Heart left ventricle (tissue), 16 donors: ENCODE measurements at regions of chr15 and their contacts with region 1.

Region 1: GRCh38 chr15:93087825-93088199 is 1.2 kb downstream of the RGMA start:
- DNase-seq: peak; percentile 63 to 79 (median 71)
- ATAC-seq: peak; percentile 46 to 73 (median 69)
- H3K4me3 ChIP-seq: peak overlapping the region; percentile 42 to 81 (median 63)
- H3K27ac ChIP-seq: peak overlapping the region; percentile 63 to 86 (median 78)
- H3K4me1 ChIP-seq: peaks cover 0 to 29% (median 12%) of the 10 kb centered on the region in 12 donors
- H3K27me3 ChIP-seq: peaks cover 0 to 66% (median 6%) of the 10 kb centered on the region in 9 donors
- CTCF ChIP-seq: peak; percentile 84 to 95 (median 91)
- POLR2A ChIP-seq: no peak

Region 2: GRCh38 chr15:92845126-92845508 is 242.7 kb before region 1 on chr15:
- intact Hi-C with region 1: no loop called
- DNase-seq: no peak
- ATAC-seq: peak; percentile 51 to 71 (median 61)
- H3K4me3 ChIP-seq: peak overlapping the region in 1 of 12 donors; percentile 21
- H3K27ac ChIP-seq: peak overlapping the region in 3 of 12 donors; percentile 4 to 88 (median 4)
- H3K4me1 ChIP-seq: peaks cover 0 to 43% (median 9%) of the 10 kb centered on the region in 12 donors
- H3K27me3 ChIP-seq: no peaks in the 10 kb centered on the region
- CTCF ChIP-seq: no peak
- POLR2A ChIP-seq: no peak

Region 3: DNA sequence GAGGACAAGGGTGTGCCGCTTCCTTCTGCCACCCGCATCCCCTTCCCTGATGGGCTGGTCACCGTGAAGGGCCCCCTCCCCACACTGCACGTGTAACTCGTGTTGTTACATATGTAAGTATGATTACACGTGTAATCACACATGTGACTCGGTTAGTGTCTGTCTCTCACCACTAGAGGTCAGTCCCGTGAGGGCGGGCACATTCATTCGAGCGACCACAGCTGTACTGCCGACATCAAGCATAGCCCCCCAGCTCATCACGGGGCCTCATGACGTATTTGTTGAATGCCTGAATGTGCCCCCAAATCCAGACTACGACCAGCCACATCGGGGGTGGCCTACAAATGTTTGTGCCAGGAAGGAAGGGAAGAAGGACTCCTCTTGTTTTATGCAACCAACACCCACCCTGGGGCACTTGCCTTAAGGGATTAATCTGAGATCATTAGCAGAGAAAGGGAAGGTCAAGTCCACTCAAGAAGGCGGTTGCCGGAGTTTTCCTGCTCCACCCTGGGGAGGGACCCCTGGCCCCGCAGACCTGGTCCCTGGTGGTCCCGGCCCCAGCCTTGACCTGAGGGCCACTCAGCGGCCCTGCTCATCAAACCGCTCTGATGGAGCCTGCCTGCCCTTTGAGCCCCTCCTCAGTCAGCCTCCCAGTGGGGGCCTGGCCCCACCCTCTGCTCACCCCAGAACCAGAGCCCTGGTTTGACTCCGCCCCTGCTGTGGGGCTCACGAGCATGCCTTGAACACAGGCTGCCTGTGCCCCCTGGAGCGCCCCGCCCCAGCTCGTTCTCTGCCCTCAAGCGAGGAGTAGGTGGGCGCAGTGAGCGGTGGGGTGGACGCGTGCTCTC is 51.6 kb before region 1 on chr15:
- intact Hi-C with region 1: loop called in 4 of 10 experiments (anchors 5 kb)
- DNase-seq: peak in 3 of 5 donors; percentile 19 to 54 (median 43)
- ATAC-seq: peak in 3 of 4 donors; percentile 9 to 44 (median 32)
- H3K4me3 ChIP-seq: no peak overlapping the region
- H3K27ac ChIP-seq: no peak overlapping the region
- H3K4me1 ChIP-seq: peaks cover 0 to 27% (median 3%) of the 10 kb centered on the region in 12 donors
- H3K27me3 ChIP-seq: no peaks in the 10 kb centered on the region
- CTCF ChIP-seq: peak; percentile 31 to 68 (median 51)
- POLR2A ChIP-seq: no peak

Region 4: DNA sequence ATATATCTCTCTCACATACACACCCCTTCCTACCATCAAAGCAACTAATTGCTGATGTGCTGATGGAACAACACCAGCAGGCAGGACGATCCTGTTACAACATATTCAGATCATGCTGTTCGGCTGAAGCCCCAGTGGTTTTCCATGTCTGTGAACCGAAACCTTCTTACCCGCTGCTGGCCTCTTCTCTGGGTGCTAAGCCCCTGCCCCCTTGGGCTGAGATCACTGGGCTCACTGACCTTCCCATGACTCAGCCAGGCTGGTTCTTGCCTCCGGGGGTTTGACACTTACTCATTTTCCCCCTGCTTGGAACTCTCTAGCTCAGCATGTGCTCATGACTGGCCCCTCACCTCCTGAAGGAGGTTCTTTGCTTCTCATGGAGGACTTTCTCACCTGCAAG is 123.2 kb after region 1 on chr15:
- intact Hi-C with region 1: loop called in 1 of 10 experiments (anchors 5 kb)
- DNase-seq: no peak
- ATAC-seq: no peak
- H3K4me3 ChIP-seq: no peak overlapping the region
- H3K27ac ChIP-seq: no peak overlapping the region
- H3K4me1 ChIP-seq: peaks cover 0 to 8% (median 0%) of the 10 kb centered on the region in 12 donors
- H3K27me3 ChIP-seq: no peaks in the 10 kb centered on the region
- CTCF ChIP-seq: no peak
- POLR2A ChIP-seq: no peak

Region 5: DNA sequence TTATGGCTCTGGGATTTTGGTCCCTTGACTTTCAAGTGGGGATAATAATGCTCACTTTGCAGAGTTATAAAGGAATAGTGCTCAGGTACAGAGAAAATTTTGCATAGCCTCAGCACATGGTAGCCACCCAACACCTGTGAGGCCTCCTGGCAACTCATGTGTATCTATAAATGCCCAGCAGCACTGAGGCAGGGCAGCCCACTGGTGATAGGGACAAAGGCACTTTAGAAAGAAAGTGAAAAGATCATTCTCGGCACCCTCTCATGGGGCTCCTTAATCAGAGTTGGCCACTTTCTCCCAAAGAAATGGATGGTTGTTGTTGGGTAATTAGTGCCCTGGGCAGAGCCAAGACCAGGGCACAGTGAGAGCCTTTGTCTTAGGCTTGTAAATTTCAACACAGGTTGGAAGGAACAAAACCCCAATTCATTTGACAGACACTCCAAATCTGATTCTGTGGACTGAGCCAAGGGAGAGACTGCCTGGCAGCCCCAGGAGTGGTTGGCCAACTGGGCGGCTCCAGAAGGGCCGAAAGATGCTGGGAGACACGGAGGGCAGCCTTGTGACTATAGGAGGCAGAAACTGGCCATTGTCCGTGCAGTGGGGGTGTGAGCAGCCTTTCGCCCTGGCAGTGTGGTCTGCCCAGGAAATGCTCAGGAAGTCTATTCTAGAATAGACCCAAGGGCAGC is 214.4 kb after region 1 on chr15:
- intact Hi-C with region 1: loop called in 2 of 10 experiments (anchors 5 kb)
- DNase-seq: no peak
- ATAC-seq: no peak
- H3K4me3 ChIP-seq: no peak overlapping the region
- H3K27ac ChIP-seq: no peak overlapping the region
- H3K4me1 ChIP-seq: peaks cover 0 to 3% (median 0%) of the 10 kb centered on the region in 12 donors
- H3K27me3 ChIP-seq: no peaks in the 10 kb centered on the region
- CTCF ChIP-seq: no peak
- POLR2A ChIP-seq: no peak

Region 6: GRCh38 chr15:93459396-93459795 is 371.6 kb after region 1 on chr15:
- intact Hi-C with region 1: loop called in 1 of 10 experiments (anchors 5 kb)
- DNase-seq: no peak
- ATAC-seq: no peak
- H3K4me3 ChIP-seq: no peak overlapping the region
- H3K27ac ChIP-seq: no peak overlapping the region
- H3K4me1 ChIP-seq: peaks cover 0 to 4% (median 0%) of the 10 kb centered on the region in 12 donors
- H3K27me3 ChIP-seq: peaks cover 0 to 4% (median 0%) of the 10 kb centered on the region in 9 donors
- CTCF ChIP-seq: no peak
- POLR2A ChIP-seq: no peak

Region 7: DNA sequence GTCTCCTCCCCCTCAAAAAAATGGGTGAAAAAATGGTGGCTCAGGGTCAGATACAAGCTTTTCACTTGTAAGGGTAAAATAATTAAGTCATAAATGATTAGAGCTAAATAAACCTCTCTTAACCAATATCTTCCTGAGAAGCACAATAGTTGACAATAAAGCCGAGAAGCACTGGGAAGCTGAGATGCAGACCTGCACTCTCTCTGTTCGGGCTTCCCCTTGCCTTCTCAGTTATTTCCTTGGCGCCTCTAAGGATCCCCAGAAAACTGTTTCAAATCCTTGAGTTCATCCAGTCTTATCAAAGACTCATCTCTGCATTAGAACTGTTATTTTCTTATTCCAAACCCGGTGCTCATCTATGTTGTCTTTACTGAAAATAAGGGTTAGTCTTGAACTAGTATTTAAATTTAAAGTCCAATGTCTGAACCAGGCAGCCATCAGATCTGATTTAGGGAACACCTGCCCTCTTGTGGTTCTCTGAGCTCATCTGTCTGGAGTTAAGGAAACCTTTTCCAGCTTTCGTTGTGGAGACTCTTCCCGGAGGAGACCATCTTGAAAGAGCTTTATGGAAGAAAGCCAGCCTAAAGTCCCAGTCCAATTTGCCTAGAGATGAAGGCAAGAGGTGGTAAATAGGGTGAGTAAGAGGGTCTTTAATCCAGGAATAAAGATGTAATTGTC is 887.1 kb after region 1 on chr15:
- intact Hi-C with region 1: loop called in 5 of 10 experiments (anchors 5 to 10 kb)
- DNase-seq: no peak
- ATAC-seq: peak in 2 of 4 donors; percentile 45 to 66
- H3K4me3 ChIP-seq: no peak overlapping the region
- H3K27ac ChIP-seq: no peak overlapping the region
- H3K4me1 ChIP-seq: peaks cover 0 to 4% (median 0%) of the 10 kb centered on the region in 12 donors
- H3K27me3 ChIP-seq: no peaks in the 10 kb centered on the region
- CTCF ChIP-seq: peak in 11 of 12 donors; percentile 18 to 51 (median 36)
- POLR2A ChIP-seq: no peak

Region 8: DNA sequence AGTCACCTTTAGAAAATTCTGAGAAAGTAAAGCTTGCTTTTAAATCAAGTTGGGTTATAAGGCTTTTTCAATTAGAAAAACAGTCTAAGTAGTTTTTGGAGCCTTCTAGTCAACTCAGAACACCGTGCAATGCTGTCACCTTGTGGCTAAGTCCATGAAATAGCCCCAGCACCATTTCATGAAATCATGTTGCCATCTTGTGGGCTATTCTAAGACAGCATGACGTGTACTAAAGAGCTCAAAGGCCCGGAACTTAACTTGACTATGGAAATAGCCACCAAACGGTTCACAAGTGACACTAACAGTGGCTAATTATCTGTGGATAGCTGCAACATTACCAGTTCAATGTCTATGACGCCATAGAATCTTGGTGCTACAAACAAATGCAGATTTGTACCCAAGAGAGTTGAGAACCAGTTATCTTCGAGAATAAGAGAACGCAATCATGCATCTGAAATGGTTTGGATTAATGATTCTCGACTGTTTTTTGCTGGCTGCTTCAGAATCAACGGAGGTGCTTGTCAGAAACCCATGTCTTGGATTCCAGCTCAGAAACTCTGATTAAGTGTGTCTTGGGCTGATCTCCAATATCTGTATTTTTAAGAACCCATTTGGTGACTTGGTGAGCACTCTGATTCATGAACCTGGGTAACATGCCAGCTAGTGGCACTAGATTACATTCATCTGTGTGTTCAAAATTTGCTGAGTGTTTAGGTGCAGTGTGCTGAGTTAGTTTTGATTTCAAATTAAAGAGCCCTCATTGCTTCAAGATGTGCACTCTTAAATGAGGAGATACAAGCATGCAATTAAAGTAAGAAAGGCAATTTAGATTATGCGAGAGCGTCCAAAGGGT is 1032.3 kb after region 1 on chr15:
- intact Hi-C with region 1: loop called in 2 of 10 experiments (anchors 2 to 5 kb)
- DNase-seq: peak in 4 of 5 donors; percentile 43 to 65 (median 54)
- ATAC-seq: peak; percentile 90 to 98 (median 96)
- H3K4me3 ChIP-seq: no peak overlapping the region
- H3K27ac ChIP-seq: peak overlapping the region in 11 of 12 donors; percentile 20 to 72 (median 60)
- H3K4me1 ChIP-seq: peaks cover 0 to 7% (median 0%) of the 10 kb centered on the region in 12 donors
- H3K27me3 ChIP-seq: no peaks in the 10 kb centered on the region
- CTCF ChIP-seq: peak; percentile 65 to 94 (median 86)
- POLR2A ChIP-seq: no peak